Naive thymus-derived CD4-positive, alpha-beta T cell (primary cell): ENCODE measurements at regions of chr14 and their contacts with region 1.

Region 1: GRCh38 chr14:91899212-91899611 is 31.9 kb upstream of the TC2N start:
- DNase-seq: peak in 1 of 9 donors; percentile 21
- ATAC-seq: no peak
- H3K4me3 ChIP-seq: no peak overlapping the region
- H3K4me3 Mint-ChIP-seq: no peak overlapping the region
- H3K27ac ChIP-seq: no peak overlapping the region
- H3K27ac Mint-ChIP-seq: peak overlapping the region in 1 of 9 donors; percentile 77
- H3K4me1 ChIP-seq: no peaks in the 10 kb centered on the region
- H3K4me1 Mint-ChIP-seq: peaks cover 2 to 33% (median 17%) of the 10 kb centered on the region in 7 donors
- H3K27me3 ChIP-seq: no peaks in the 10 kb centered on the region
- H3K27me3 Mint-ChIP-seq: no peaks in the 10 kb centered on the region

Region 2: DNA sequence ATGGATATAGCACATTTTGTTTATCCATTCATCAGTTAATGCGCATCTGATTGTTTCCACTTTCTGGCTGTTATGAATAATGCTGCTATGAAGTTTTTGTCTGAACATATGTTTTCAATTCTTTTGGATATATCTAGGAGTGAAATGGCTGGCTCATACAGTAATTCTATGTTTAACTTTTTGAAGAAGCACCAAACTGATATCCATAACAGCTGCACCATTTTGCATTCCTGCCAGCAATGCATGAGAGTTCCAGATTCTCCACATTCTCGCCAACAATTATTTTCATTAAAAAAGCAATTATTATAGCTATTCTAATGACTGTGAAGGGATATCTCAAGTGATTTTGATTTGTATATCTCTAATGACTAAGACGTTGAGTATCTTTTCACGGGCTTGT is 299.2 kb before region 1 on chr14:
- CTCF ChIA-PET with region 1: no interaction called
- POLR2A ChIA-PET with region 1: no interaction called
- intact Hi-C with region 1: no loop called
- DNase-seq: no peak
- ATAC-seq: no peak
- H3K4me3 ChIP-seq: no peak overlapping the region
- H3K4me3 Mint-ChIP-seq: no peak overlapping the region
- H3K27ac ChIP-seq: no peak overlapping the region
- H3K27ac Mint-ChIP-seq: no peak overlapping the region
- H3K4me1 ChIP-seq: no peaks in the 10 kb centered on the region
- H3K4me1 Mint-ChIP-seq: peaks cover 0 to 3% (median 0%) of the 10 kb centered on the region in 7 donors
- H3K27me3 ChIP-seq: no peaks in the 10 kb centered on the region
- H3K27me3 Mint-ChIP-seq: peaks cover 0 to 10% (median 0%) of the 10 kb centered on the region in 5 donors

Region 3: GRCh38 chr14:91830777-91831176 is 68.4 kb before region 1 on chr14:
- CTCF ChIA-PET with region 1: interaction called, 3 read pairs
- POLR2A ChIA-PET with region 1: interaction called, 11 read pairs
- intact Hi-C with region 1: loop called in 1 of 2 experiments (anchors 10 kb)
- DNase-seq: no peak
- ATAC-seq: no peak
- H3K4me3 ChIP-seq: no peak overlapping the region
- H3K4me3 Mint-ChIP-seq: peak overlapping the region in 7 of 10 donors; percentile 20 to 60 (median 42)
- H3K27ac ChIP-seq: no peak overlapping the region
- H3K27ac Mint-ChIP-seq: peak overlapping the region in 7 of 9 donors; percentile 0 to 75 (median 49)
- H3K4me1 ChIP-seq: peaks cover 22 to 33% of the 10 kb centered on the region in 2 donors
- H3K4me1 Mint-ChIP-seq: peaks cover 45 to 96% (median 81%) of the 10 kb centered on the region in 7 donors
- H3K27me3 ChIP-seq: no peaks in the 10 kb centered on the region
- H3K27me3 Mint-ChIP-seq: peaks cover 0 to 3% (median 0%) of the 10 kb centered on the region in 5 donors

Region 4: GRCh38 chr14:92302481-92302880 is 403.3 kb after region 1 on chr14:
- CTCF ChIA-PET with region 1: no interaction called
- POLR2A ChIA-PET with region 1: no interaction called
- intact Hi-C with region 1: no loop called
- DNase-seq: no peak
- ATAC-seq: no peak
- H3K4me3 ChIP-seq: no peak overlapping the region
- H3K4me3 Mint-ChIP-seq: no peak overlapping the region
- H3K27ac ChIP-seq: no peak overlapping the region
- H3K27ac Mint-ChIP-seq: peak overlapping the region in 1 of 9 donors; percentile 32
- H3K4me1 ChIP-seq: no peaks in the 10 kb centered on the region
- H3K4me1 Mint-ChIP-seq: peaks cover 0 to 6% (median 0%) of the 10 kb centered on the region in 7 donors
- H3K27me3 ChIP-seq: no peaks in the 10 kb centered on the region
- H3K27me3 Mint-ChIP-seq: peaks cover 0 to 30% (median 14%) of the 10 kb centered on the region in 5 donors

Region 5: DNA sequence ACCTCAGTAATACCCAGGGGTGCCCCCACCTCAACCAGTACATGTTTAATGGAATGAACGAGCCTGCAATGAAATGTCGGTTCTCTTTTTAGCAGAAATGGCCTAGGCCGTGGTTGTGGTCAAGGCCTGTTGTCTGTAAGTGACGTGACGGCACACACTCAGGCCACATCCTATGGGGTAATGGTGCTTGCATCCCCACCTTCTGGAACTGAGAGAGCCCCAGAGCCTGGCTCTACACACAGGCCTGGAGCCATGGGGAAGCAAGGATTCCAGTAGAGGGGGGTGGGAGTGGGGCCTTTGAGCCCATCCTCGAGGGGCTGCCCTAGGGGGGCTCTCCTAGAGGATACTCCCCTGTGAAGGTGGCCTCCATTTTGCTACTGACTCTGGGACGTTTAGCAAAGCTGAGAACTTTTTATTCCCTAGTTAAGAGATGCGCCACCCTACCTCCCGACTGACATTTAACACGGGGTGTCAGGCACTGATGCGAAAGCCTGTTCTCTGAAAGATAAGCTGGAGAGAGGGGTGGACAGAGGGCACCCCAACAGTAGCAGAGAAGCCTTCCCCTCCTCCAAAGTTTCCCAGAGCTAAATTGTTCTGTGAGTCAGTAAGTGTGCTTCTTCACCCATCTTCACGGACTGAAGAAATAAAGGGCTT is 621.0 kb after region 1 on chr14:
- CTCF ChIA-PET with region 1: no interaction called
- POLR2A ChIA-PET with region 1: no interaction called
- intact Hi-C with region 1: no loop called
- DNase-seq: no peak
- ATAC-seq: peak; percentile 82
- H3K4me3 ChIP-seq: no peak overlapping the region
- H3K4me3 Mint-ChIP-seq: peak overlapping the region in 1 of 10 donors; percentile 33
- H3K27ac ChIP-seq: no peak overlapping the region
- H3K27ac Mint-ChIP-seq: peak overlapping the region in 2 of 9 donors; percentile 33 to 78
- H3K4me1 ChIP-seq: peaks cover 40 to 50% of the 10 kb centered on the region in 2 donors
- H3K4me1 Mint-ChIP-seq: peaks cover 32 to 86% (median 57%) of the 10 kb centered on the region in 7 donors
- H3K27me3 ChIP-seq: no peaks in the 10 kb centered on the region
- H3K27me3 Mint-ChIP-seq: peaks cover 0 to 26% (median 0%) of the 10 kb centered on the region in 5 donors